WTC11 (cell line): ENCODE measurements at regions of chr1 and their contacts with region 1.

Region 1: DNA sequence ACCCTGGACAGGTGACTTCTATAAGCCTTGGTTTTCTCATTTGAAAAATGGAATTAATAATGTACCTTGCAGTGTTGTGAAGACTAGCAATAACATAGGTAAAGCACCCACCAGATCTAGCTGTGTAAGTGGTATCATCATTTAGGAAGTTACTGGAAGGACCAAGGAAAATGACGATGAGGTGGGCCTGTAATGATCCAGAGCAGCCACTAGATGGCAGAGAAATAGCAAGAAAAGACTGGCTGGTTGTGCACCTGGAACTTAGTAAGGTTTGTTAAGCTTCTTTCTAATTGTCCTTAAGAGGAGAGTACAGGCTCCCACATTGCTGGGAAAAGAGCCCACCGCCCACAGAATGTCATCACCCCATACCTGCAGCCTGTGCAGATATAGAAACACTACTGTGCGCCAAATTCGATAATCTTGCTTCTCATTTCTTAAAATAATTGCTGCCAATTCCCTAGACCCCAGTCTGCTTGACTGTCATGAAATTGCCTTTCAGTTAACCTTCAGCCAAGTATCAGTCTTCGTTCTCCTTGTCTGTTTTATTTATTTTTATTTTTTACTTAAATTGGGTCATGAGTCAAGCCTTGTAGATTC is 37.2 kb downstream of the WNT4 start:
- DNase-seq: no peak
- ATAC-seq: peak; percentile 60
- H3K4me3 Mint-ChIP-seq: no peak overlapping the region
- H3K27ac Mint-ChIP-seq: no peak overlapping the region; the same call in 1 of the 2 replicates
- H3K4me1 Mint-ChIP-seq: peaks cover 11% of the 10 kb centered on the region; the same call in 1 of the 2 replicates
- H3K27me3 Mint-ChIP-seq: no peaks in the 10 kb centered on the region
- CTCF ChIP-seq: peak; percentile 72

Region 2: GRCh38 chr1:22064751-22065402 is 40.8 kb before region 1 on chr1:
- CTCF ChIA-PET with region 1: no interaction called
- POLR2A ChIA-PET with region 1: no interaction called
- DNase-seq: no peak
- ATAC-seq: no peak
- H3K4me3 Mint-ChIP-seq: no peak overlapping the region
- H3K27ac Mint-ChIP-seq: peak overlapping the region; percentile 47; the same call in 1 of the 2 replicates
- H3K4me1 Mint-ChIP-seq: peaks cover 51% of the 10 kb centered on the region
- H3K27me3 Mint-ChIP-seq: no peaks in the 10 kb centered on the region
- CTCF ChIP-seq: no peak

Region 3: GRCh38 chr1:22121411-22121911 is 15.8 kb after region 1 on chr1:
- CTCF ChIA-PET with region 1: interaction called, 16 read pairs
- POLR2A ChIA-PET with region 1: no interaction called
- DNase-seq: no peak
- ATAC-seq: peak; percentile 58
- H3K4me3 Mint-ChIP-seq: no peak overlapping the region
- H3K27ac Mint-ChIP-seq: 0 out of 2 replicates have a peak overlapping the region, but pooled peaks have one; percentile 48
- H3K4me1 Mint-ChIP-seq: peaks cover 22% of the 10 kb centered on the region
- H3K27me3 Mint-ChIP-seq: no peaks in the 10 kb centered on the region
- CTCF ChIP-seq: no peak

Region 4: GRCh38 chr1:22131875-22132486 is 26.3 kb after region 1 on chr1:
- CTCF ChIA-PET with region 1: interaction called, 10 read pairs
- POLR2A ChIA-PET with region 1: no interaction called
- DNase-seq: peak; percentile 85
- ATAC-seq: peak; percentile 83
- H3K4me3 Mint-ChIP-seq: no peak overlapping the region
- H3K27ac Mint-ChIP-seq: no peak overlapping the region
- H3K4me1 Mint-ChIP-seq: peaks cover 14% of the 10 kb centered on the region
- H3K27me3 Mint-ChIP-seq: no peaks in the 10 kb centered on the region
- CTCF ChIP-seq: peak; percentile 94

Region 5: GRCh38 chr1:22318279-22318981 is 212.7 kb after region 1 on chr1:
- CTCF ChIA-PET with region 1: no interaction called
- POLR2A ChIA-PET with region 1: no interaction called
- DNase-seq: peak; percentile 76
- ATAC-seq: peak; percentile 79
- H3K4me3 Mint-ChIP-seq: no peak overlapping the region
- H3K27ac Mint-ChIP-seq: no peak overlapping the region
- H3K4me1 Mint-ChIP-seq: peaks cover 41% of the 10 kb centered on the region
- H3K27me3 Mint-ChIP-seq: peaks cover 16% of the 10 kb centered on the region
- CTCF ChIP-seq: no peak